ENCODE measurements at regions of chr14 and their contacts with region 1.

Region 1: DNA sequence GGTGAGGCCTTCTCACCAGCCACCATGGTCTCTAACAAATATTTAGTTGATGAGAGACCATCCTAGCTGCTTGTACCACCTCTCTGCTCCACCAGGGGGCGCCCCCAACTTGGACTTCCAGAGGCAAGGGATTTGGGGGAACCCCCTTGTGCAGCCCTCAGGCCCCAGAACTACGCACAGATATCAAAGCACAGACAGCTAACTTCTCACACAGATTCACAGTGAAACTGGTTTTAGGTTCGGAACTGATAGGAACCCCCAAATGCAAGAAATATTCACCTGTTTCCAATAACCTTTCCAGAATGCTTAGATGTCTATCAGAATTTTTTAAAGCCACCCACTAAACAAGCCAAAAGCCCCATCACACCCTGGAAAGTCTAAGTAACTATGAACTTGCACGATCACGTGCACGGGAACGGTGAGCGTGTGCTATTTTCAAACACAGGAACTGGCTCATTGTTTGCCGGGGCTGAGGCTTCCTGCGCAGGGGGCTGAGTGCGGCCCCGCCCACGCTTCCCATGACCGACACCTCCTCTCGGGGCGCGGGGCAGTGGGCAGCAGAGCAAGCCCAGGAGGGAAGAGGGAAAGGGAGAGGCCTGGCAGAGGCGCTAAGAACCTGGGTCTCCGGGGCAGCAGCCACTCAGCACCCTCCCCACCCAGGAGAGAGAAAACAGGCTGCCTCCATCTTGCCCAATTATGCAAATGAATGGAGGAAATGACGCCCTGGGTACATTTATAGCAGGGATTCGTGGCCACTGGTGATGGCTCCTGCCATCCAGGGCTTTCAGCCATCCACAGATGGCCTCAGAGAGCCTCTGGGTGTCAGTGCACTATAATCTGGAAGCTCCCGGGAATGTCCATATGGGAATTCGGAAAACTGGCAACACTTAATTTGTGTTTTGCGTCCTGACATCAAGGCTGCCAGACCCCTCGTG is 79.4 kb upstream of the GPR68 start:
- DNase-seq: peak; percentile 81
- H3K4me3 ChIP-seq: peak overlapping the region; percentile 36 to 50; a peak in 3 of 4 replicates
- H3K27ac ChIP-seq: peak overlapping the region in 1 of 2 experiments; percentile 53; a peak in 2 of 4 replicates
- H3K4me1 ChIP-seq: peaks cover 0 to 58% of the 10 kb centered on the region in 2 experiments; a peak in 1 of 4 replicates
- H3K27me3 ChIP-seq: no peaks in the 10 kb centered on the region
- CTCF ChIP-seq: peak; percentile 99
- EP300 ChIP-seq: no peak
- RAD21 ChIP-seq: peak; percentile 89

Region 2: DNA sequence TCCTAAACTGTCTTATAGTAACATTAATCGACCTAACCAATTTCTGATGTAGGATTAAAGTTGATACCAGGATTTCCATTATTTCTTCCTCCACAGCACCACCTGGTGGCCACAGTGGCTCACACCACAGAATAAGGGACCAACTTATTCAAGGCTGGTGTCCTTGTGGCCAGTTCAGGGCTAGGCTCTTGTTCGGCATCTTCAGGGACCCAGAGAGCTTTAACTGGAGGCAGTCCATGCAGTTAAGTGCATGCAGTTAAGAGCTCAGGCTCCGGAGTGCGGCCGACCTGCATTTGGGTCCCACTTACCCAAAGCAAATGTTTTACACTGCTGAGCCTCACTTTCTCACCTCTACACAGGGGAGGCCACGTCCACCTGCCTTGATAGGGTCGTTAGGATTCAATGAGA is 37.4 kb before region 1 on chr14:
- CTCF ChIA-PET with region 1: interaction called, 24 read pairs
- POLR2A ChIA-PET with region 1: no interaction called
- DNase-seq: peak; percentile 83
- H3K4me3 ChIP-seq: no peak overlapping the region; a peak in 1 of 4 replicates
- H3K27ac ChIP-seq: peak overlapping the region in 1 of 2 experiments; percentile 99; a peak in 2 of 4 replicates
- H3K4me1 ChIP-seq: peaks cover 20 to 37% of the 10 kb centered on the region in 2 experiments; a peak in 3 of 4 replicates
- H3K27me3 ChIP-seq: no peaks in the 10 kb centered on the region
- CTCF ChIP-seq: peak; percentile 90
- EP300 ChIP-seq: peak in 1 of 2 experiments; percentile 22; a peak in 1 of 4 replicates
- RAD21 ChIP-seq: peak; percentile 97

Region 3: DNA sequence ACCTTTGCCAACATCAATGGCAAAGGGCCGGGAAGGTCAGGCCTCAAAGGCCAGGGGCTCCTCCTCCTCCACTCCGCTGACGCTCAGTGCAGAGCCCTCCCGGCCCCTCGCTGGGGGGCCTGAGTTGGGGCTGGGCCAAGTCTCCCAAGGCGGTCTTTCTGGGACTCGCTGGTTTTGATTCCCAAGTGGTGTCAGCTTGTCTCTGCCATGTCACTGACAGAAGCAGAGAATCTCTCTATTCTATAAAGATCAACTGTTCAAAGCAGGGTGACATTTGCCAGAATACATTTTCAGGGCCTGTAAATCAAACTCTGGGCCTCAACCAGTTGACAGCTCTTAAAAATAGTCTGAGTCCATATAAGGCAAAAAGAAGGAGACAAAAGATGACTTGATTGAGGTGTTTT is 17.8 kb after region 1 on chr14:
- CTCF ChIA-PET with region 1: interaction called, 32 read pairs
- POLR2A ChIA-PET with region 1: interaction called, 4 read pairs
- DNase-seq: no peak
- H3K4me3 ChIP-seq: no peak overlapping the region
- H3K27ac ChIP-seq: no peak overlapping the region
- H3K4me1 ChIP-seq: peaks cover 0 to 6% of the 10 kb centered on the region in 2 experiments; a peak in 1 of 4 replicates
- H3K27me3 ChIP-seq: no peaks in the 10 kb centered on the region
- CTCF ChIP-seq: no peak
- EP300 ChIP-seq: no peak
- RAD21 ChIP-seq: no peak

Region 4: DNA sequence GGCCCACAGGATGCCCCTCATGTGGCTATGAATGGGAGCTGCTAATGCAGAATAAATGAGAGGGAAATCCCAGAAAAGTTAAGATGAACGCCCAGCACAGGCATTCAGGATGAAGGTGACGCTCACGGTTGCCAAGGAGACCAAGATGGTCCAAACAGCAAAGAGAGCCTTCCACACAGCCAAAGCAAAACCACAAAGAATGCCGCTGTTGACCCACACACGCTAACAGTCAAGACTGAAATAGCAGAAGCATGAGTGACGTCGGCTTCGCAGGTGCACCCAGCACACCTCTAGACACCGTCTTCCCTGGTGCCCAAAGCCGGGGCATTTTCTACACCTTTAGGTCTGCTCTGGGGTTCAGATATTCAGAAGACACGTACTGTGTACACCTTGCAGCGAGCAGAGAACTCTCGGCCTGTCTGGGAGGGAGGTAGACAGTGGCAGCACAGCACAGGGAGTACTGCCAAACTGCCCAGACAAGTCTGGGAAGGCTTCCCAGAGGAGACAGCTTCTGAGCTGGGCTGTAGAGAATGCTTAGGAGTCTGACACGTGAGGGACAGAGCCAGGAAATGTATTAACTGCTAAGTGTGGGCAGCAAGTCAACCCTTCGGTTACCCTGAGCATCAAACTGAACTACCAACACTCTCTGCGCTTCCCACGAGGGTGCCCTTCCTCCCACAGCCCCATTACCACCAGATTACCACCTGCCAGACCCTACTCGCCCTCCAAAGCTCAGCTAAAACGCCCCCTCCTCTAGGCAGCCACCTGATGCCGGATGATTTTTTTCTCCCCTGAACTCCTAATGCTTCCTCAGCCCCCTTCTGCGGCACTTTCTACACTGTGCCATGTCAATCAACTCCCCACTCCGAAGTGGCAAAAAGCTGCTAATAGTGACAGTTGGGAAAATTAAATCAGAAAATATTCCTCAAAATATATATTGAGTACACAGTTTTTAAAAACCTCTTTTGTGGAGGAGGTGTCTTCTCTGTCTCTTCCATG is 43.5 kb after region 1 on chr14:
- CTCF ChIA-PET with region 1: interaction called, 154 read pairs
- POLR2A ChIA-PET with region 1: no interaction called
- DNase-seq: no peak
- H3K4me3 ChIP-seq: no peak overlapping the region
- H3K27ac ChIP-seq: no peak overlapping the region
- H3K4me1 ChIP-seq: peaks cover 0 to 30% of the 10 kb centered on the region in 2 experiments; a peak in 1 of 4 replicates
- H3K27me3 ChIP-seq: no peaks in the 10 kb centered on the region
- CTCF ChIP-seq: no peak
- EP300 ChIP-seq: no peak
- RAD21 ChIP-seq: no peak

Region 5: GRCh38 chr14:91402771-91403600 is 79.0 kb after region 1 on chr14:
- CTCF ChIA-PET with region 1: interaction called, 12 read pairs
- POLR2A ChIA-PET with region 1: interaction called, 3 read pairs
- DNase-seq: peak; percentile 54
- H3K4me3 ChIP-seq: no peak overlapping the region
- H3K27ac ChIP-seq: peak overlapping the region in 1 of 2 experiments; percentile 59; a peak in 2 of 4 replicates
- H3K4me1 ChIP-seq: peaks cover 0 to 25% of the 10 kb centered on the region in 2 experiments; a peak in 1 of 4 replicates
- H3K27me3 ChIP-seq: no peaks in the 10 kb centered on the region
- CTCF ChIP-seq: no peak
- EP300 ChIP-seq: no peak
- RAD21 ChIP-seq: no peak